IMR-90 (cell line): ENCODE measurements at regions of chr2 and their contacts with region 1.

Region 1: GRCh38 chr2:206159346-206160124 is at the starts of genes EEF1B2 and NDUFS1:
- DNase-seq: peak; percentile 99
- ATAC-seq: peak; percentile 91
- H3K4me3 ChIP-seq: peak within 1 kb of the TSS; percentile 75
- H3K27ac ChIP-seq: peak within 1 kb of the TSS; percentile 85
- H3K4me1 ChIP-seq: peaks cover 2% of the 10 kb centered on the region
- H3K27me3 ChIP-seq: no peaks in the 10 kb centered on the region
- CTCF ChIP-seq: no peak
- POLR2A ChIP-seq: peak; percentile 87
- RAD21 ChIP-seq: no peak
- total RNA-seq, gene EEF1B2: 574 and 672 TPM in 2 replicates
- total RNA-seq, gene NDUFS1: 118 and 187 TPM in 2 replicates

Region 2: DNA sequence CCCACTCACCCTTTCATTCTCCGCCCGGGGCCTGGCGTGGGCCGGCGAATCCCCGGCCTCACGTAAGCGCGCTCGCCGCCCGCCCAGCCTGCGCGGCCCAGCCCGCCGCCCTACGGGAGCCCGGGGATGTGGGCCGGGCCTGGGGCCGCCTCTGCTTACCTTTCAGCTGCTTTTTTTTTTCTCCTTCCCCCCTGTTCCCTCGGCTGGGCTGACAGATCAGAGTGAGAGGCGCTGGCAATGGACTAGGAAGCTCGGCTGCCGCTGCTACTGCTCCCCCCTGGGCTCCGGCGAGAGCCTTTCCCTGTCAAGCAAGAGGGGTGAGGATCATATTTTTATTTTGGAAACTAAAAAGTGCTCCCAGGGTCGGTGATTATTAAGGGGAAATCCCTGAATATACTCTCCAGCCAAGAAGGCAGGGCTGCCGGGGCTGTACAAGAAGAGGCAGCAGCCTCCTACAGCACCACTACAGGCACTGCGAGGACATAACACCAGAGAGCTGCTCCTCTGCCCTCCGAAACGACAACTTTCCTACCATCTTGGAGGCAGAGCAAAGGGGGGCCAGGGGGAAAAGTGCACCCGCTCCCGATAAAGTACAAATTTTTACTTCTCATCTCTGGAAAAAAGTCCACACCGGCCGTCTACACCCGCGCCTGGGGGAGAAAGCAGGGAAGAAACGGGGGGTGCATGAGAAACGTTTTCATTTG is 73.6 kb before region 1 on chr2 and contains the start of gene INO80D:
- CTCF ChIA-PET with region 1: no interaction called
- POLR2A ChIA-PET with region 1: interaction called, 3 read pairs
- dilution Hi-C with region 1: no loop called
- in situ Hi-C with region 1: no loop called
- intact Hi-C with region 1: loop called (anchors 1 kb)
- DNase-seq: peak; percentile 86
- ATAC-seq: peak; percentile 70
- H3K4me3 ChIP-seq: peak within 1 kb of the TSS; percentile 60
- H3K27ac ChIP-seq: peak within 1 kb of the TSS; percentile 91
- H3K4me1 ChIP-seq: peaks cover 4% of the 10 kb centered on the region
- H3K27me3 ChIP-seq: no peaks in the 10 kb centered on the region
- CTCF ChIP-seq: peak; percentile 52
- POLR2A ChIP-seq: peak; percentile 74; the same call in 1 of the 2 replicates
- RAD21 ChIP-seq: no peak; the same call in 1 of the 2 replicates
- total RNA-seq, gene INO80D: 4.5 and 5.0 TPM in 2 replicates

Region 3: DNA sequence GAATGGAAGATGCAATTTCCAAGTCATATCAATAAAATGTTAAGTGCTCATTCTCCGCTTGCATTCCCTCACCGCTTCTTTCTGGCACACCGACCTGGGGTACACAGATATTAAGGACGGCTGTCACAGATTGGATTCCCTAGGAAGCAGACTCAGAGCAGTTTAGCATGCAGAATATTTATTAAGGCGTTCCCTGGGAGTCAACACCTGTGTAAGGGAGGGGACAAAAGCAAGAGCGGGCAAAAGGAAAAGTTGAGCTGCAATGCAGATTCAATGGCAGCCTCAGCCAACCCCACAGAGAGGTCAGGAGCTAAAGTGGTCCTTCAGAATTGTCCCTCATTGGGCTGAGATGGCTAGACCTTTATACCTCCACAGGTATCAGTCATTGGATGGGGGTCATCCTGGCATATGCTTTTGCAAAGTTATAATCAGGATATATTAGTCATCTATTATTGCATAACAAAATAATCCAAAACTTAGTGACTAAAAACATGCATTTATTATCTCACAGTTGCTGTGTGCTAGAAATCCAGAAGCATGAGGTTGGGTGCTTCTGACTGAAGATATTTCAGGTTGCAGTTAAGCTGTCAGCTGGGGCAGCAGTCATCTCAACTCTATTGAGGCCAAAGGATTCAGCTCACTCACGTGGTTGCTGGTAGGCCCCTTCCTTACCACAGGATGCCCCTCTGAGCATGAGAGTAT is 46.5 kb before region 1 on chr2:
- CTCF ChIA-PET with region 1: no interaction called
- POLR2A ChIA-PET with region 1: no interaction called
- dilution Hi-C with region 1: no loop called
- in situ Hi-C with region 1: no loop called
- intact Hi-C with region 1: no loop called
- DNase-seq: peak; percentile 45
- ATAC-seq: peak; percentile 31
- H3K4me3 ChIP-seq: no peak overlapping the region
- H3K27ac ChIP-seq: no peak overlapping the region
- H3K4me1 ChIP-seq: peaks cover 2% of the 10 kb centered on the region
- H3K27me3 ChIP-seq: no peaks in the 10 kb centered on the region
- CTCF ChIP-seq: no peak
- POLR2A ChIP-seq: no peak
- RAD21 ChIP-seq: no peak

Region 4: DNA sequence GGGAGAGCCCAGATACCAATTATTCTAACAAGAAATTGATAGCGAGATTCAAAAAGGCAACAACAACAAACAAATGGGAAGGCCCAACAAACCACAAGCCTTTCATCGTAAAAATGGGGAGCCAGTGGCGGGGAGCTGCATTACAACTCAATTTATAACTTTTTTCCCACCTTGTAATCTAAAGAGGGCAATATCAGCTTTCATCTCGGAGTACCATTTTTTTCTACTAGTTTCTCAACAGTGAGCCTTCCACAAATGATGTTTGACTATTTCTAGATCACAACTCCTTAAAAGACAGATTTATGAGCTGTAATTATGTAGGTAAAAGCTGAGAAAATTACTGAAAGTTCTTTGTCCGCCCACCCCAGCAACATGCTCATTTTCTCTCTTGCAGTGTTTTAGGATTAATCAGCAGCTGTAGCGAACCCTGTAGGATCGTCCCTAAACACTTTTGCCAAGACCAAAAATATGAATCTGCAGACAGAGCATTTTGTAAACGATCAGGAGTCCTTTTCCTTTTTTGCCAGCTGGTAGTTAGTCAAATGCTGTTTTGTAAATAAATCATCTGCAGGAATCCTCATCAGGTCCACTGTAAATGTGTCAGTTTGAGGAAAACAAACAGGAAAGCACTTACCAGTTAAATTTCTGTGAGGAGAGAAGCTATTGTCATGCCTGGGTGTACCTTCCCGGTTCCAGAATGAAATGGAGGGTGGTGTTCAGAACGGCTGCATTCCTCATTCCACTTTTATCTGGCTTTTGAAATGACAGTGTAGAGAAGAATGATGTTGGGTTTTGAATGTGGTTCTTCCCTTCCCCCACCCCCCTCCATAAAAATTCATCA is 53.4 kb after region 1 on chr2:
- CTCF ChIA-PET with region 1: no interaction called
- POLR2A ChIA-PET with region 1: no interaction called
- dilution Hi-C with region 1: no loop called
- in situ Hi-C with region 1: no loop called
- intact Hi-C with region 1: loop called (anchors 2 kb)
- DNase-seq: peak; percentile 17
- ATAC-seq: peak; percentile 75
- H3K4me3 ChIP-seq: peak overlapping the region; percentile 28; the same call in 1 of the 2 replicates
- H3K27ac ChIP-seq: no peak overlapping the region
- H3K4me1 ChIP-seq: no peaks in the 10 kb centered on the region
- H3K27me3 ChIP-seq: peaks cover 6% of the 10 kb centered on the region
- CTCF ChIP-seq: no peak
- POLR2A ChIP-seq: no peak
- RAD21 ChIP-seq: no peak

Region 5: GRCh38 chr2:206260188-206261012 is 100.9 kb after region 1 on chr2:
- CTCF ChIA-PET with region 1: interaction called, 3 read pairs
- POLR2A ChIA-PET with region 1: no interaction called
- dilution Hi-C with region 1: no loop called
- in situ Hi-C with region 1: loop called (anchors 10 kb)
- intact Hi-C with region 1: loop called (anchors 1 kb)
- DNase-seq: peak; percentile 10
- ATAC-seq: peak; percentile 73
- H3K4me3 ChIP-seq: no peak overlapping the region
- H3K27ac ChIP-seq: no peak overlapping the region
- H3K4me1 ChIP-seq: no peaks in the 10 kb centered on the region
- H3K27me3 ChIP-seq: peaks cover 61% of the 10 kb centered on the region
- CTCF ChIP-seq: peak; percentile 43
- POLR2A ChIP-seq: no peak
- RAD21 ChIP-seq: peak; percentile 41

Region 6: GRCh38 chr2:206442833-206443734 is 283.5 kb after region 1 on chr2 and contains the start of gene ADAM23:
- CTCF ChIA-PET with region 1: no interaction called
- POLR2A ChIA-PET with region 1: no interaction called
- dilution Hi-C with region 1: no loop called
- in situ Hi-C with region 1: no loop called
- intact Hi-C with region 1: loop called (anchors 2 kb)
- DNase-seq: peak; percentile 52
- ATAC-seq: peak; percentile 82
- H3K4me3 ChIP-seq: peak within 1 kb of the TSS; percentile 79
- H3K27ac ChIP-seq: peak within 1 kb of the TSS; percentile 60
- H3K4me1 ChIP-seq: no peaks in the 10 kb centered on the region
- H3K27me3 ChIP-seq: peaks cover 24% of the 10 kb centered on the region
- CTCF ChIP-seq: 0 out of 2 replicates have a peak, but pooled peaks have one; percentile 13
- POLR2A ChIP-seq: no peak
- RAD21 ChIP-seq: no peak
- total RNA-seq, gene ADAM23: 2.9 and 3.9 TPM in 2 replicates